ENCODE measurements at regions of chr13 and their contacts with region 1.

Region 1: GRCh38 chr13:26985285-26985878 is 186.2 kb downstream of the USP12 start:
- DNase-seq: peak; percentile 81 to 91 (median 87)
- H3K4me3 ChIP-seq: no peak overlapping the region
- H3K27ac ChIP-seq: no peak overlapping the region
- H3K4me1 ChIP-seq: peaks cover 16 to 48% (median 31%) of the 10 kb centered on the region in 4 experiments
- H3K27me3 ChIP-seq: no peaks in the 10 kb centered on the region

Region 2: GRCh38 chr13:26946684-26947343 is 38.6 kb before region 1 on chr13:
- CTCF ChIA-PET with region 1: interaction called, 101 read pairs
- POLR2A ChIA-PET with region 1: no interaction called
- DNase-seq: peak; percentile 70 to 83 (median 80)
- H3K4me3 ChIP-seq: no peak overlapping the region
- H3K27ac ChIP-seq: no peak overlapping the region
- H3K4me1 ChIP-seq: peaks cover 0 to 7% (median 2%) of the 10 kb centered on the region in 4 experiments
- H3K27me3 ChIP-seq: no peaks in the 10 kb centered on the region

Region 3: DNA sequence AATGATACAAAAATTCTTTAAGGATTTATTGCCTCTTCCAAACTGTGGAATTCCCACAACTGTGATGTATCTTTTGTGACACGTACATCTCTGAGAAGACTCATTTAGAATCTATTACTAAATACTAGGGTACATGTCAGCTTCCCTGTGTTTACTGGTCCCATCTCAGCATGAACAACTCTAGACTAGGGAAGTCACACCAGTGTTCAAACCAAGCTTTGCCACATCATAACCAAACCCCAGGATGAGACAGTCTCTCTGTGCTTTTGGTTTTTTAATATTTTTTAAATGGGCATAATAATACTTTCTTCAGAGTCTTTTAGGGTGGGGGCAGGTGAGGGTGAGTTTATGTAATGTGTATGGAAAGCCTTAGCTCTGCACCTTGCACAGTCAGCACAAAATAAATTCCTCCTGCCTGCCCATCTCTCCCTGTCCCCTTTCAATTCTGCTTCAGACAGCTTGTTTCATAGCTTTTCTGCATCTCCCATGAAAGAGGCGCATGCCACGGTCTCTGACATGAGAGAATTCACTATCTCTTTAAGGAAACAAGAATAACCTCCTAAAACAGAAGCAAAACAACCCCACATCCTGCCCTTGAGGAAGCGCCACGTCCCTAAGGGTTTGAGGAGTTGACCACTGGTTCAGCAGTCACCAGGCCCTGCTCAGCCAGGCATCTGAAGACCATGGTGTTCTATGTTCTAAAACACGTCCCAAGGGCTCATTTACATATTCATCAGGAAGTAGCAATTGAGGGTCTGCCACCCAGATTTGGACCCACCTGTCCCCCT is 11.8 kb after region 1 on chr13:
- CTCF ChIA-PET with region 1: interaction called, 14 read pairs
- POLR2A ChIA-PET with region 1: no interaction called
- DNase-seq: no peak
- H3K4me3 ChIP-seq: peak overlapping the region in 1 of 7 experiments; percentile 8
- H3K27ac ChIP-seq: no peak overlapping the region
- H3K4me1 ChIP-seq: peaks cover 0 to 9% (median 3%) of the 10 kb centered on the region in 4 experiments
- H3K27me3 ChIP-seq: no peaks in the 10 kb centered on the region

Region 4: DNA sequence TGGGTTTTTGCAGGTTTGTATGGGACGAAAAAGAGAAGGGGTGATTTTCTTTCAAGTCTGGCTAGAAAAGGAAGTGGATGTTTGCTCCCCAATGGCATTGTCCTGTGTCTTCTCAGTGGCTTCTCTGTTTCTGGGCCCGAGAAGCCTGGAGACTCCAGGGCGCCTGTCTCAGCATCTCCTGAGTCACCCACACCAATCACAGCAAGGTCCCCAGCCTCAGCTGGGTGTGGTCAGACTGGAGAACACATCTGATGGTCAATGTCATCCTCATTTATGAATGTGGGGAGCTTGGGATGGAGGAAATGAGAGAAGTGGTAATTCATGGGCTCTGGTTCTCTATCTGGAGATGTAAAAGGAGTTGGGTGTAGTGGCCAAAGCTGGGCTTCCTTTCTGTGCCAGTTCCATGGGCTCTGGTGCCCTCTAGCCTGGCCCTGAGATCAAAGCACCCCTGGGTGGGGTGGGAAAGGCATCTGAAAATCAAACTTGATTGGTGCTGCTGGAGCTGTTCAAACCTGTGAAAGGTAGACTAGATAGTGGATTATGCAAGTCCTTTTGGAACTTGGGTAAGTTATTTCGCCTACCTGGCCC is 298.6 kb after region 1 on chr13:
- CTCF ChIA-PET with region 1: interaction called, 38 read pairs
- POLR2A ChIA-PET with region 1: no interaction called
- DNase-seq: peak; percentile 34 to 56 (median 56)
- H3K4me3 ChIP-seq: no peak overlapping the region
- H3K27ac ChIP-seq: no peak overlapping the region
- H3K4me1 ChIP-seq: peaks cover 0 to 4% (median under 1%) of the 10 kb centered on the region in 4 experiments
- H3K27me3 ChIP-seq: no peaks in the 10 kb centered on the region

Region 5: GRCh38 chr13:27362064-27362883 is 376.9 kb after region 1 on chr13:
- CTCF ChIA-PET with region 1: interaction called, 181 read pairs
- POLR2A ChIA-PET with region 1: interaction called, 3 read pairs
- DNase-seq: peak; percentile 80 to 88 (median 84)
- H3K4me3 ChIP-seq: peak overlapping the region; percentile 24 to 87 (median 63)
- H3K27ac ChIP-seq: no peak overlapping the region
- H3K4me1 ChIP-seq: peaks cover 0 to 15% (median 10%) of the 10 kb centered on the region in 4 experiments
- H3K27me3 ChIP-seq: peaks cover 0 to 19% (median 4%) of the 10 kb centered on the region in 5 experiments